Panc1 (cell line): ENCODE measurements at regions of chr19 and their contacts with region 1.

Region 1: DNA sequence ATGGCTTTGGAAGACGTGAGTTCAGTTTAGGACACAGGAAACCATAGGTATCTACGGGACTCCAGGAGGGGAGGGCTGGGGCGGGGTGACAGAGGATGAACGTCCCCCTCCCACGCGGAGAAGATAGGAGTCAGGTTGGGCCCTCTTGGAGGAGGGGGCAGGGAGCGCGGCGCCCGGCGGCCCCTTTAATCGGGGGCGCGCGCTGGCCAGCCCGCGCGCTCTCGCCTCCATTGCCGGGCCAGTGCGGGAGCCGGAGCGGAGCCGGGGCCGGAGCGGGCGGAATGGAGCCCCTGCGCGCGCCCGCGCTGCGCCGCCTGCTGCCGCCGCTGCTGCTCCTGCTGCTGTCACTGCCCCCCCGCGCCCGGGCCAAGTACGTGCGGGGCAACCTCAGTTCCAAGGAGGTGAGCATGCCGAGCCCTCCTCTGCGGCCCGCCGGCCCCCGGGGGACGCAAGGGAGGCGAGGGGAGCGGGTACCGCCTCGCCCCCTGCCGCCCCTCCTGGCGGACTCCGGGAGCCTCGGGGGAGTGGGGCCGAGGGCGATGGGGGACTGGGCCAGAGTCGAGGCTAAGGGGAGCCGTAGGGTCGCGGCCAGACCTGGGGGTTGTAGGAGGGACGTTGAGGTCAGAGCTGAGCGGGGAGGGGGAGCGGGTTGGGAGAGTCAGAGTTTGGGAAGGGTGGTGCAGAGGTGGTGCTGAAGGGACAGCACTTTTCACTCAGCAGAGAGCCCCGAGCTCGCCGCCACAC is at the start of gene TMEM145:
- DNase-seq: no peak
- ATAC-seq: peak; percentile 78
- H3K4me3 ChIP-seq: peak within 1 kb of the TSS; percentile 44 to 48
- H3K27ac ChIP-seq: no peak within 1 kb of the TSS
- H3K4me1 ChIP-seq: no peaks in the 10 kb centered on the region
- H3K27me3 ChIP-seq: no peaks in the 10 kb centered on the region
- CTCF ChIP-seq: no peak; the same call in 1 of the 2 replicates
- total RNA-seq, gene TMEM145: 3.0 TPM

Region 2: GRCh38 chr19:42078545-42079275 is 234.6 kb before region 1 on chr19:
- CTCF ChIA-PET with region 1: no interaction called
- POLR2A ChIA-PET with region 1: interaction called, 10 read pairs
- in situ Hi-C with region 1: no loop called
- intact Hi-C with region 1: no loop called
- DNase-seq: no peak
- ATAC-seq: no peak
- H3K4me3 ChIP-seq: no peak overlapping the region
- H3K27ac ChIP-seq: no peak overlapping the region
- H3K4me1 ChIP-seq: no peaks in the 10 kb centered on the region; the same call in 1 of the 2 replicates
- H3K27me3 ChIP-seq: no peaks in the 10 kb centered on the region
- CTCF ChIP-seq: no peak

Region 3: DNA sequence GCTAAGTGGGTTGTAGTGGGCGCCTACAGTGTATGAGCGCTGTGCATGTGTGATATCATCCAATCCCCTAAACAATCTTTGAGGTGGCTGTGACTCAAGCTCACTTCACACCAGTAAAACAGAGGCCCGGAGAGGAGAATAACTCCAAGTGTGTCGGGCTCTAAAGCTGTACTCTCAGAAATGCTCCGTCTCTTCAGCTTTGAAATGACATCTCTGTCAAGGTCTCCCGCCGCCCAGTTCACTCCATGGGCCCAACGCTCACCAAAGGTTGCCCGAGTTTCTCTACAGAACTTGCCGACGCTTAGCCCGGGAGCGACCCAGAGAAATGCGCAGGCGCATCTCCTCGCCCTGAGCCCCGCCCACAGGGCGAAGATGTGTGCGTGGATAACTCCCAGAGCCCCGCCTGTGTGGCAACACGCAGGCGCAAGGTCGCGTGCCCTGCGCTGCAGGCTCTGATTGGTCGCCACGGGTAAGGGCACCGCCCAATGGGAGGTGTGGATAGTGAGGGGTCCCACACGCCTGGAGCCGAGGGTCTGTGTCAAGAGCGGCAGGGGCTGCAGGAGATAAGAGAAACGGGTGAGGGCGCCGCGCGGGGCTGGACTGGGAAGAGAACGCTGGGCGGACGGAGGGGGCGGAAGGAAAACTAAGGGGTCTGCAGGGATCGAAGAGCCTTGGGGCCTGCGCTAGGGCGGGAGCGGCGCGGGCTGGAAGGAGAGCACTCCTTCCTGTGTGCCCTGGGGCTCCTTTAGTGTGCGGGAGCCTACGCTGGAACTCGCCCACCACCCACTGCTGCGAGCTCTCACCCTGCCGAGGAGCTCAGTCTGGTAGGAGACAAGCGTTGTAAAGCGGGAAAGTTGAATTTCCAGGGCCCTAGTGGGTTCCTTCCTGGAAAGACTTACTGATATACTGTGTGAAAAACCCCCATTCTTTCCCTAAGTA is 93.2 kb before region 1 on chr19 and contains the start of gene ZNF526:
- CTCF ChIA-PET with region 1: no interaction called
- POLR2A ChIA-PET with region 1: no interaction called
- in situ Hi-C with region 1: no loop called
- intact Hi-C with region 1: no loop called
- DNase-seq: peak; percentile 86
- ATAC-seq: peak; percentile 94
- H3K4me3 ChIP-seq: peak within 1 kb of the TSS; percentile 76 to 94
- H3K27ac ChIP-seq: peak within 1 kb of the TSS; percentile 93
- H3K4me1 ChIP-seq: peaks cover 8% of the 10 kb centered on the region; the same call in 1 of the 2 replicates
- H3K27me3 ChIP-seq: no peaks in the 10 kb centered on the region
- CTCF ChIP-seq: no peak
- total RNA-seq, gene ZNF526: 10.5 TPM